Activated CD4-positive, alpha-beta T cell treated with anti-CD3 and anti-CD28 coated beads, Interleukin-2, amount 10 ng/mL, durations not matched to agents 24 days and 14 days (primary cell): ENCODE measurements at regions of chr3 and their contacts with region 1.

Region 1: GRCh38 chr3:60064210-60065178 is 1014.7 kb upstream of the CFAP20DC start:
- DNase-seq: peak; percentile 71
- H3K4me3 Mint-ChIP-seq: peak overlapping the region; percentile 43
- H3K27ac Mint-ChIP-seq: peak overlapping the region; percentile 89
- H3K4me1 Mint-ChIP-seq: peaks cover 61% of the 10 kb centered on the region
- H3K27me3 Mint-ChIP-seq: no peaks in the 10 kb centered on the region

Region 2: DNA sequence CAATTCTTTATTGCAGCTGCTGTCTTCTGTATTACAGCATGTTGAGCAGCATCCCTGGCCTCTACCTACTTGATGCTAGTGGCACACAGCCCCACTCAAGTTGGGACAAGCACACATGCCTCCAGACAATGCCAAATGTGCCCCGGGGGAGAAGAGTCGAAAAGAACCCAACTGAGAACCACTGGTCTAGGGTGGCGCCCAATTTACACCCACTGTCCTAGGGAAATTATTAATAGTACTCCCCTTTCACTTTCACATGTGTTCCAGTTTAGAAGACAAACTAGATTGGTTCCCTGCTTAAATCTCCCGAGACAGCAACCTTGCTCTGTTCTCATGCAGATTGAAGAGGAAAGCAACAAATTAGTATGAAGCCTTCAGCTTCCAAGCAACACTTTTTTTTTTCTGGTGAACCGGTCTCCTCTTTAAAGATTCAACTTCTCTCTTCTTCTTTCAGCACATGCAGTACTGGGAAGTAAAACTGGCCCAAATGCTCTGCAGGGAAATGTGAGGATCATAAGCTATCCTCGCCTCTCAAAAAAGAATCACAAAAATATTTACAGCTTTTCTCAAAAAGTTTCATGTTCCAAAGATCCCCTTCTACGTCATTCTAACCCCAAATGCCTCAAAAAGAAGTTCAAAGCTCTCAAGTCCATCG is 190.8 kb before region 1 on chr3:
- intact Hi-C with region 1: no loop called
- DNase-seq: no peak
- H3K4me3 Mint-ChIP-seq: no peak overlapping the region
- H3K27ac Mint-ChIP-seq: peak overlapping the region; percentile 31
- H3K4me1 Mint-ChIP-seq: peaks cover 30% of the 10 kb centered on the region
- H3K27me3 Mint-ChIP-seq: no peaks in the 10 kb centered on the region

Region 3: GRCh38 chr3:60048447-60048848 is 16.0 kb before region 1 on chr3:
- intact Hi-C with region 1: loop called (anchors 1 kb)
- DNase-seq: peak; percentile 91
- H3K4me3 Mint-ChIP-seq: peak overlapping the region; percentile 80
- H3K27ac Mint-ChIP-seq: peak overlapping the region; percentile 91
- H3K4me1 Mint-ChIP-seq: peaks cover 70% of the 10 kb centered on the region
- H3K27me3 Mint-ChIP-seq: no peaks in the 10 kb centered on the region